Activated CD4-positive, alpha-beta T cell treated with anti-CD3 and anti-CD28 coated beads for 36 hours (primary cell): ENCODE measurements at regions of chr9 and their contacts with region 1.

Region 1: GRCh38 chr9:101530077-101530711 is 3.5 kb upstream of the RNF20 start:
- DNase-seq: peak; percentile 78
- ATAC-seq: peak; percentile 15
- H3K4me3 Mint-ChIP-seq: no peak overlapping the region
- H3K27ac Mint-ChIP-seq: no peak overlapping the region
- H3K4me1 Mint-ChIP-seq: peaks cover 20% of the 10 kb centered on the region
- H3K27me3 Mint-ChIP-seq: peaks cover 6% of the 10 kb centered on the region

Region 2: DNA sequence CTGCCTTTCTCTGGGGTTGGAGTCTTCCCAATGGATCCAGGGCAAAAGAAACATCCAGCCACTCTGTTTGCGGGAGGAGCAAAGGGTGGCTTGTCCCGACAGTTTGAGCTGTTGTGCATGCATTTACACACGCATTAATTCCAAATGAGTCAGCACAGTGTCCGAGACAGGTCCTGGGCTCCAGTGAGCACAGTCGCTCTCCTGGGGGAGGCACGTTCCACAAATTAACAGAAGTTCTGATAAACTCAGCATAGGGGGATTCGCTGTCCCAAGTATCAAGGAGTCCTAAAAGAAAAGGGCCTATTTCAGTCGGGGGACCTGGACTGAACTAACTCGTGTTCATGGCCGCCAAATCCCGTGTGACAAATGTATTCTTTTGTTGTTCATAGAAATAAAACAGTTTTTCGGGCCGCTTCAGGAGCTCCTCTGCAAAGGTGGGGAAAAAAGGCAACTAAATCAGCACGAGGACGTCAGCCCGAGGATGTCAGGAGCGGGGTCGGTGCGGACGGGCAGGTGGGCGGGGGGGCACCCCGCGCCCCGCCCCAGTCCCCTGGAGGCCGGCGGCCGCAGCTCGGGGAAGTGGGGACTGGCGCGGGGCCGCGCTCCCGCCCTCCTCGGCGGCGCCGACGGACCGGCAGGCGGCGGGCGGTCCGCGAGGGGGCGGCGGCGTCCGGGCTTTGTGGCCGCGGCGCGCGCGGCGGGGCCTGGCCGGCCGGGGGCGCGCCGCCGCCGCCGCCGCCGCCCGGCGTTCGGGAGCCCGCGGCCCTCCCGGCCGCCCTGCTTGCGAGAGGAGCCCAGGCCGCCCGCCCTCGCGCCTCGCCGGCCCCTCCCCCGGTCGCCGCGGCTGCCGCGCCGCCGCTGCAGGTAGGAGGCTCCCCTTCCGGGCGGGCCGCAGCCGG is 1103.4 kb before region 1 on chr9 and contains the start of gene MSANTD3:
- CTCF ChIA-PET with region 1: no interaction called
- POLR2A ChIA-PET with region 1: no interaction called
- intact Hi-C with region 1: loop called in 1 of 2 experiments (anchors 10 kb)
- DNase-seq: peak; percentile 71
- ATAC-seq: peak; percentile 74
- H3K4me3 Mint-ChIP-seq: peak within 1 kb of the TSS; percentile 81
- H3K27ac Mint-ChIP-seq: peak within 1 kb of the TSS; percentile 91
- H3K4me1 Mint-ChIP-seq: peaks cover 30% of the 10 kb centered on the region
- H3K27me3 Mint-ChIP-seq: no peaks in the 10 kb centered on the region
- total RNA-seq, gene MSANTD3: 17.9 to 21.6 TPM

Region 3: DNA sequence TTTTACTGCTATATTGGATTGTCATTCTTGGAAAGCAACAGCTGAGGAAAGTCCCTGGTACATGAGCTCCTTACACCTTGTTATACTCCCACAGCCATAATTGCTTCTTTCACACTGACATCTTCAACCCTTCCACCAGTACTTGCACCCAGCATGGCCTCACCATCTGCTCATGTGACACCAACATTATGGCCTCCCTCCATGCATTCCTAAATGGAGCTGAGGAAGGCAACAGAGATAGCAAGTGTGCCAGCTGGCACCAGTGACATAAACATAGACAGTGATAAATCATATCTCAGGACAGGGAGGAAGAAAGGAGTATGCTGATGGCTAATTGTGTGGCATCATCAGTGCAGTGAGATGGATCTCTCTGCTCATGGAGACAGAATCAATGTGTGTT is 264.9 kb before region 1 on chr9:
- CTCF ChIA-PET with region 1: no interaction called
- POLR2A ChIA-PET with region 1: no interaction called
- intact Hi-C with region 1: no loop called
- DNase-seq: no peak
- ATAC-seq: no peak
- H3K4me3 Mint-ChIP-seq: no peak overlapping the region
- H3K27ac Mint-ChIP-seq: no peak overlapping the region
- H3K4me1 Mint-ChIP-seq: no peaks in the 10 kb centered on the region
- H3K27me3 Mint-ChIP-seq: peaks cover 3% of the 10 kb centered on the region

Region 4: GRCh38 chr9:101398068-101398929 is 131.9 kb before region 1 on chr9 and contains the starts of genes MRPL50 and ZNF189:
- CTCF ChIA-PET with region 1: interaction called, 5 read pairs
- POLR2A ChIA-PET with region 1: interaction called, 9 read pairs
- intact Hi-C with region 1: loop called (anchors 1 kb)
- DNase-seq: peak; percentile 98
- ATAC-seq: peak; percentile 97
- H3K4me3 Mint-ChIP-seq: peak within 1 kb of the TSS; percentile 94
- H3K27ac Mint-ChIP-seq: peak within 1 kb of the TSS; percentile 100
- H3K4me1 Mint-ChIP-seq: peaks cover 67% of the 10 kb centered on the region
- H3K27me3 Mint-ChIP-seq: no peaks in the 10 kb centered on the region
- total RNA-seq, gene MRPL50: 15.5 to 17.0 TPM
- total RNA-seq, gene ZNF189: 10.2 to 13.1 TPM

Region 5: GRCh38 chr9:101458955-101459631 is 71.1 kb before region 1 on chr9:
- CTCF ChIA-PET with region 1: interaction called, 59 read pairs
- POLR2A ChIA-PET with region 1: interaction called, 3 read pairs
- intact Hi-C with region 1: loop called (anchors 1 kb)
- DNase-seq: peak; percentile 33
- ATAC-seq: peak; percentile 97
- H3K4me3 Mint-ChIP-seq: no peak overlapping the region
- H3K27ac Mint-ChIP-seq: no peak overlapping the region
- H3K4me1 Mint-ChIP-seq: no peaks in the 10 kb centered on the region
- H3K27me3 Mint-ChIP-seq: peaks cover 19% of the 10 kb centered on the region

Region 6: DNA sequence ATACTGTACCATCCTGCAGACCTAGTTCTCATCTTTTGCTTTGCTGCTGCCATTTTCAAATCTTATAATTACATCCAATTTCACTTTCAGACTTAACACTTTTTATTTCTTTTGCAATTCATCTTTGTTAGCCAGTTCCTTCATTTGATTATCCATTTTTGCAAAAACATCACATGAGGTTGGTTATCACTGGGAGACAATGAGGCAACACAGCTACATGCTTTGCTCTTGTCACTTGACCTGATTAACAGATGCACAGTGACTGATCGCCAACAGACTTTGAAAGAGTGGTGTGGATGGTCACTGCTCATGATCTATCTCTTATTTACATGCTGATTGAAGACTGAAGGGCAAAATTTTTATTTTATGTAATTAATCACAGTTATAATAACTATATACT is 13.5 kb before region 1 on chr9:
- CTCF ChIA-PET with region 1: interaction called, 13 read pairs
- POLR2A ChIA-PET with region 1: no interaction called
- intact Hi-C with region 1: no loop called
- DNase-seq: no peak
- ATAC-seq: no peak
- H3K4me3 Mint-ChIP-seq: no peak overlapping the region
- H3K27ac Mint-ChIP-seq: no peak overlapping the region
- H3K4me1 Mint-ChIP-seq: peaks cover 8% of the 10 kb centered on the region
- H3K27me3 Mint-ChIP-seq: peaks cover 42% of the 10 kb centered on the region

Region 7: DNA sequence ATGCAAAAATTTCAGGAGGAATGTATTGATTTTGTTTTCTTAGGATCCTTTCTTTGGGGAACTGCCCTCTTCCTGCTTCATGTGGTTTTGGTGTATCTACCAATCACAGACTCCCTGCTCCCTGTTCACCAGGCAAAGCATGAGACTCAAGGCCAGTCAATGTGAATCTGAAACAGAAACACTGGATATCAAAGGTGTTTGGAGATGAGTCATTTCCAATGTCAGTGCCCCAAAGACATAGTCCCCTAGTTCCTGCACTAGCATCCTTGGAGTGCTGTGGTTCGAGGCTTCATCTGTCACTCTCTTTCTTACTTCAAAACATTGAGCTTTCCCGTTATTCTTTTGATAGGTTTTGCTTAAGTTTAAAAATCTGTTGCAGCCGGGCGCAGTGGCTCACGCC is 56.5 kb after region 1 on chr9:
- CTCF ChIA-PET with region 1: no interaction called
- POLR2A ChIA-PET with region 1: no interaction called
- intact Hi-C with region 1: loop called in 1 of 2 experiments (anchors 1 kb)
- DNase-seq: peak; percentile 38
- ATAC-seq: peak; percentile 95
- H3K4me3 Mint-ChIP-seq: no peak overlapping the region
- H3K27ac Mint-ChIP-seq: no peak overlapping the region
- H3K4me1 Mint-ChIP-seq: peaks cover 12% of the 10 kb centered on the region
- H3K27me3 Mint-ChIP-seq: peaks cover 6% of the 10 kb centered on the region